A549 (cell line): ENCODE measurements at regions of chr20 and their contacts with region 1.

Region 1: DNA sequence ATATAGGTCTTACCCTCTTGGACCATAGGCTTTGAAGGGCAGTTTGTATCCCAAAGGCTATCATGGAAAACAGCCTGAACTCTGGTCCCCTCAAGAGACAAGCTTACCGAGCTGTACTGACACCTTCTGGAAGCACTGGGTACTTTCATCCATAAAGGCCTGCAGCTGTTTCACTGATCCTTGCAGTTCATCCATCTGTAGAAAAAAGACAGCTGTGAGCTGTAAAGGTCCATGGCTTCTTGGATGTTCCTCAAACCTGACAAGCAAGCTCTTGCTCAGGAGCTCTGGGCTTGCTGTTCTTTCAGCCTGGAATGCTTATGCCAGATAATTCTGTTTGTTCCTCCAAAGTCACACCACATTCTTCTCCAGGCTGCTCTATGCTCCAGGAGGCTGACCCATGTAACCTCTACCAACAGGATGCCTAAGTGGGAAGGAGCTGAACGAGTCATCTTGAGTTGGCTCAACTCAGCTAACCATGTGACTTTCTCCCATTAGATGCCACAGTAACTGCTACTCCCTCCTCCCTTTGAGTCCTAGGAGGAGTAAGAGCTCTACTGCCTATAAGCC is 8.8 kb upstream of the NDRG3 start:
- DNase-seq: peak; percentile 76 to 77
- ATAC-seq: peak; percentile 96 to 97
- H3K4me3 ChIP-seq: no peak overlapping the region
- H3K27ac ChIP-seq: no peak overlapping the region
- H3K4me1 ChIP-seq: no peaks in the 10 kb centered on the region
- CTCF ChIP-seq: peak; percentile 68
- EP300 ChIP-seq: no peak
- POLR2A ChIP-seq: no peak
- RAD21 ChIP-seq: peak; percentile 66 to 67

Region 2: GRCh38 chr20:36666181-36666740 is 88.5 kb before region 1 on chr20:
- CTCF ChIA-PET with region 1: interaction called, 10 read pairs
- POLR2A ChIA-PET with region 1: no interaction called
- DNase-seq: peak in 1 of 2 experiments; percentile 42
- ATAC-seq: peak; percentile 39 to 61; a peak in 2 of 6 replicates
- H3K4me3 ChIP-seq: no peak overlapping the region
- H3K27ac ChIP-seq: no peak overlapping the region
- H3K4me1 ChIP-seq: no peaks in the 10 kb centered on the region
- CTCF ChIP-seq: peak; percentile 28; the same call in 2 of the 3 replicates
- EP300 ChIP-seq: no peak
- POLR2A ChIP-seq: no peak
- RAD21 ChIP-seq: peak; percentile 27 to 49; a peak in 3 of 5 replicates

Region 3: DNA sequence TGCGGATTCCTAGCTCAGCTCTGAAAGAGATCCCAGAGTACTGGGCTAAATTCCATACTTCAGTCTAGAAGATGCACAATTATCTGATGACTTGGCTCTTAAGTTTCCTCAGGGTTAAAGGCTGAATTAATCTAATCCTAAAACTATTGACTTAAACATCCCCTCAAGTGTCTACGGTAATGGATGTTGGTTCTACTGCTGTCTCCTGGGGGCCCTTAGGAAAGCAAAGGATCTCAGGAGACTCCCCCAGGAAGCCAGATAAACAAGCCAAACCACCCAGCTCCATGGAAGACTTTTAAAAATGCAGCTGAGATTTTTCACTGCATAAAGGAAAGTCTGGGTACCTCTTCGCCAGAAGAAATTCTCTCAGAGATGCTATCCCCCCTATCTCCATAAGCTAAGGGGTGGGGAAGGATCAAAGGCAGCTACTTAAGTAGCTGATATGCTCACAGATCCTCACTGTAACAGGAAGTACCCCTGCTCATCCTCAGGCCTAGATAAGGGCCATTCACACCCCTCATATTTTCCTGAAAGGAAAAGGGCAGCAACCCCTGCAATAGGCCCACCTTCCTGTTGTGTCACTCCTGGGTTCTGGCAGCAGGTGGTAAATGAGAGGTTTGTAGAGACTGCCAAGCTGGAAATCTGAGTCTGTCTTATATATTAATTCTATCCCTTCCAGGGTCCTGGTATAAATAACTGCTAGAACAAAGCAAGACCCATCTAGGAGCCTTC is 18.1 kb before region 1 on chr20:
- CTCF ChIA-PET with region 1: interaction called, 32 read pairs
- POLR2A ChIA-PET with region 1: no interaction called
- DNase-seq: no peak
- ATAC-seq: no peak
- H3K4me3 ChIP-seq: no peak overlapping the region
- H3K27ac ChIP-seq: no peak overlapping the region
- H3K4me1 ChIP-seq: peaks cover 11% of the 10 kb centered on the region; the same call in 2 of the 3 replicates
- CTCF ChIP-seq: no peak
- EP300 ChIP-seq: no peak
- POLR2A ChIP-seq: no peak
- RAD21 ChIP-seq: no peak

Region 4: GRCh38 chr20:36835453-36836198 is 80.9 kb after region 1 on chr20:
- CTCF ChIA-PET with region 1: no interaction called
- POLR2A ChIA-PET with region 1: no interaction called
- DNase-seq: peak; percentile 92 to 98
- ATAC-seq: peak; percentile 97 to 98
- H3K4me3 ChIP-seq: peak overlapping the region; percentile 33
- H3K27ac ChIP-seq: peak overlapping the region; percentile 87 to 92
- H3K4me1 ChIP-seq: peaks cover 34% of the 10 kb centered on the region
- CTCF ChIP-seq: no peak
- EP300 ChIP-seq: no peak
- POLR2A ChIP-seq: 0 out of 2 replicates have a peak, but pooled peaks have one; percentile 15
- RAD21 ChIP-seq: no peak